Spleen (tissue), 13 donors: ENCODE measurements at regions of chr3 and their contacts with region 1.

Region 1: GRCh38 chr3:50192689-50193141 is 1.3 kb downstream of the GNAT1 start:
- DNase-seq: peak; percentile 90
- H3K4me3 ChIP-seq: peak overlapping the region in 1 of 8 donors; percentile 16
- H3K27ac ChIP-seq: no peak overlapping the region
- H3K4me1 ChIP-seq: peaks cover 10 to 44% (median 31%) of the 10 kb centered on the region in 6 donors
- H3K27me3 ChIP-seq: peaks cover 9 to 51% (median 29%) of the 10 kb centered on the region in 7 donors
- CTCF ChIP-seq: peak; percentile 70 to 95 (median 90)
- POLR2A ChIP-seq: no peak

Region 2: GRCh38 chr3:50121416-50122032 is 71.2 kb before region 1 on chr3:
- intact Hi-C with region 1: loop called (anchors 5 kb)
- DNase-seq: peak; percentile 89
- H3K4me3 ChIP-seq: no peak overlapping the region
- H3K27ac ChIP-seq: peak overlapping the region in 3 of 8 donors; percentile 15 to 48 (median 16)
- H3K4me1 ChIP-seq: peaks cover 3 to 54% (median 28%) of the 10 kb centered on the region in 6 donors
- H3K27me3 ChIP-seq: no peaks in the 10 kb centered on the region
- CTCF ChIP-seq: peak; percentile 71 to 91 (median 85)
- POLR2A ChIP-seq: no peak

Region 3: DNA sequence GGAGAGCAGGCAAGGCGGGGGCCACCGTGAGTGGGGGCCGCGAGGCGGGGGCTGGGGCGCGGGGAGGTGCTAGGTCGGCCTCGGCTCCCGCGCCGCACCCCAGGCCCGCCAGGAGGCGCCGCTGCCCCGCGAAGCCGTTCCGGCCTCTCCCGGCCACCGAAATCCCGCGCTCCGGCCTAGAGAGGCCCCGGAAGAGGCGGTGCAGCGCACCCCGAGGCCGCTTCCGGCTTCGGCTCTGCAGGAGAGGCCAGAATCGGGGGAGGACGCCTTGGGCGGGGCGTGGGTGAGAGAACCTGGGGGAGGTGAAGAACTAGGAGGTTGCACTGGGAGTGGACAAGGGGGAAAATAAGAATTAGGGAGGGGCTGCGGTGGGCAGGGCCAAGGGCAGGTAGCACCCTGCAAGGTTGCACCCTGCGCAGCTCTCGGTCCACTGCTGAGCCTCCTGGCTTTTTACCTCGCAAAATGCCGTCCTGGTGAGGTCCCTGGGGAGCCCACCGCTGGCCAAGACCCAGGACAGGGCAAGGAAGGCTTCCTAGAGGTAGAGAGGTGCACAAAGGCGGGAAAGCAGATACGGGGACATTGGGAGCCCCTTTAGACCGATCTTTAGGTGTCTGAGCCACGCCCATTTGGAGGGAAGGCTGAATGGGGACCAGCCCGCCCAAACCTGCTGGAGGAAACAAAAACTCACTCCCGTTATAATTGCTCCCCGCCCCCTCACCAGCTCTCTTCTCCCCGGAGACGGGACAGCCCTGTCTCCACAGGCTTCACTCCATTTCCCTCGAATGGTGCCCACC is 34.9 kb after region 1 on chr3:
- intact Hi-C with region 1: loop called (anchors 5 kb)
- DNase-seq: peak; percentile 99
- H3K4me3 ChIP-seq: peak overlapping the region; percentile 62 to 79 (median 72)
- H3K27ac ChIP-seq: peak overlapping the region; percentile 74 to 92 (median 84)
- H3K4me1 ChIP-seq: peaks cover 7 to 62% (median 48%) of the 10 kb centered on the region in 6 donors
- H3K27me3 ChIP-seq: no peaks in the 10 kb centered on the region
- CTCF ChIP-seq: peak; percentile 66 to 98 (median 94)
- POLR2A ChIP-seq: peak in 1 of 3 donors; percentile 14

Region 4: DNA sequence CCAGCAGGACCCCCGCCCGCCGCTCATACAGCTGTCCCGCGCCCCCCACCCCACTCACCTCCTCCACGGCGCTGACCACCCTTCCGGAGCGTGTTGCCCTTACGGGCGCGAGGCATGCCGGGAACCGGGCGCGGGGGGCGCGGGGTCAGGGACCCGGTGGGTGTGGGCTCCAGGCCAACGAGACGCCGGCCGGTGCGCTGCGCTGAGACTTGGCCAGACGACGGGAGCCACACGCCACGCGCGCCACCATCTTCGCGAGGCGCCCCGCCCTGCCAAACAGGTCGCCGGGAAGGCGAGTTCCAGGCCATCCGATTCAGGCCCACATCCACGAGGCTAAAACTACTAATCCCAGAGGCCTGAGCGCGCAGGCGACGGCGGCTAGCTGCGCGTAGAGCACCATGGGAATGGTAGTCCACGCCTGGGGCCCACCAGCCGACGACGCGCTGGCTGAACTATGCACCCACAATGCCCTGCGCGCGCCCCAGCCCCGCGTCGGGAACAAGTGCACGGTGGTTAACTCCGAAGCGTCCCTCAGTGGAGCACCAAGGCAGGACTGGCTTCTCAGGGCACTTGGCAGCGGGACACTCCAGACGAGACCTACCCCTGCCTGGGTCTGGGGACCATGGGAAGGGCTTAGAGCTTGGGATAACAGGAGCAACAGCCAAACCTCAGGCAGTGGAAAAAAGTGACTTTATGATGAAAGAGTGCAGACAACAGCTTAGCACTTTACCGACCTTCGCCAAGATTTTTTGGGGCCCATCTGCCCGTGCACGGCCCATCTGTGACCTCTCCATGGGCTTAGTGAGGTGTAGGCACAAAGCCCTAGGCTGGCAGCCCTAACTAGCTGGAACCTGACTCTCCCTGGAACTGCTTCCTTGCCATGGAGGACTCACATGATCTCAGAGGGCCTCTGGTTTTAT is 99.7 kb after region 1 on chr3 and contains the start of gene IFRD2:
- intact Hi-C with region 1: no loop called
- DNase-seq: peak; percentile 99
- H3K4me3 ChIP-seq: peak within 1 kb of the TSS; percentile 89 to 100 (median 98)
- H3K27ac ChIP-seq: peak within 1 kb of the TSS; percentile 67 to 88 (median 79)
- H3K4me1 ChIP-seq: peaks cover 13 to 38% (median 27%) of the 10 kb centered on the region in 6 donors
- H3K27me3 ChIP-seq: no peaks in the 10 kb centered on the region
- CTCF ChIP-seq: peak in 4 of 11 experiments; percentile 17 to 35 (median 24)
- POLR2A ChIP-seq: peak in 1 of 3 donors; percentile 14
- total RNA-seq, gene IFRD2: 40.2 to 67.6 (median 48.0) TPM